Activated CD8-positive, alpha-beta T cell treated with anti-CD3 and anti-CD28 coated beads for 36 hours (primary cell): ENCODE measurements at regions of chr20 and their contacts with region 1.

Region 1: GRCh38 chr20:1776681-1777475 is 118.3 kb upstream of the SIRPA start:
- DNase-seq: peak; percentile 86
- ATAC-seq: peak; percentile 86
- H3K4me3 Mint-ChIP-seq: peak overlapping the region; percentile 84
- H3K27ac Mint-ChIP-seq: peak overlapping the region; percentile 44
- H3K4me1 Mint-ChIP-seq: peaks cover 13% of the 10 kb centered on the region
- H3K27me3 Mint-ChIP-seq: peaks cover 6% of the 10 kb centered on the region
- CTCF ChIP-seq: peak; percentile 89

Region 2: GRCh38 chr20:1503564-1504227 is 273.2 kb before region 1 on chr20:
- CTCF ChIA-PET with region 1: interaction called, 62 read pairs
- POLR2A ChIA-PET with region 1: no interaction called
- intact Hi-C with region 1: no loop called
- DNase-seq: peak; percentile 89
- ATAC-seq: peak; percentile 100
- H3K4me3 Mint-ChIP-seq: no peak overlapping the region
- H3K27ac Mint-ChIP-seq: no peak overlapping the region
- H3K4me1 Mint-ChIP-seq: peaks cover 4% of the 10 kb centered on the region
- H3K27me3 Mint-ChIP-seq: peaks cover 26% of the 10 kb centered on the region
- CTCF ChIP-seq: peak; percentile 99

Region 3: DNA sequence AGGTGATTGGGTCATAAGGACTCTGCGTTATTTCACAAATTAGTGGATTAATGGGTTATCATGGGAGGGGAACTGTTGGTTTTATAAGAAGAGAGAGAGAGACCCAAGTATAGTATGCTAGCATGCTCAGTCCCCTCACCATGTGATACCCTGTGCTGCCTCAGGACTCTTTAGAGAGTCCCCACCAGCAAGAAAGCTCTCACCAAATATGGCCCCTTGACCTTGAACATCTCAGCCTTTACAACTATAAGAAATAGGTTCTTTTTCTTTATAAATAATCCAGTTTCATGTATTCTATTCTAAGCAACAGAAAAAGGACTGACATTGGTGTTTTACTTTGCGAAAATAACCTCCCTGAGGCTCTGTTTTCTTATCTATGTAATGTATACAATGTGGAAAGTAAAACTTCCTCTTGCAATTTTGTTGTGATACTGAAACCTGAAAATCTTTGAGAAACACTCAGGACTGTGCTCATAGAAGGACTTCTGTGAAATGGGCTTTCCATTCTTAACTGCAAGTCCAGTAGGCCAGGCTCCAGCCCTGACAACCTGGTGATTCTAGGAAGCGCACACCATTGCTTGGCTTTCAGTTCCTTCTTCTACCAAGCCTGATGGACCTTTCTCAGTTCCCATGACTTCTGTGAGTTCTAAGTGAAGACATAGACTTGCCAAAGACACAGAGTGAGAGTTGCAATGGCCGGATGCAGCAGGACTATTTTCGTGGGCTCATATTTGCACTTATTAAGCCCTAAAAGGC is 241.3 kb before region 1 on chr20:
- CTCF ChIA-PET with region 1: interaction called, 23 read pairs
- POLR2A ChIA-PET with region 1: no interaction called
- intact Hi-C with region 1: no loop called
- DNase-seq: no peak
- ATAC-seq: no peak
- H3K4me3 Mint-ChIP-seq: no peak overlapping the region
- H3K27ac Mint-ChIP-seq: no peak overlapping the region
- H3K4me1 Mint-ChIP-seq: peaks cover 11% of the 10 kb centered on the region
- H3K27me3 Mint-ChIP-seq: no peaks in the 10 kb centered on the region
- CTCF ChIP-seq: no peak

Region 4: DNA sequence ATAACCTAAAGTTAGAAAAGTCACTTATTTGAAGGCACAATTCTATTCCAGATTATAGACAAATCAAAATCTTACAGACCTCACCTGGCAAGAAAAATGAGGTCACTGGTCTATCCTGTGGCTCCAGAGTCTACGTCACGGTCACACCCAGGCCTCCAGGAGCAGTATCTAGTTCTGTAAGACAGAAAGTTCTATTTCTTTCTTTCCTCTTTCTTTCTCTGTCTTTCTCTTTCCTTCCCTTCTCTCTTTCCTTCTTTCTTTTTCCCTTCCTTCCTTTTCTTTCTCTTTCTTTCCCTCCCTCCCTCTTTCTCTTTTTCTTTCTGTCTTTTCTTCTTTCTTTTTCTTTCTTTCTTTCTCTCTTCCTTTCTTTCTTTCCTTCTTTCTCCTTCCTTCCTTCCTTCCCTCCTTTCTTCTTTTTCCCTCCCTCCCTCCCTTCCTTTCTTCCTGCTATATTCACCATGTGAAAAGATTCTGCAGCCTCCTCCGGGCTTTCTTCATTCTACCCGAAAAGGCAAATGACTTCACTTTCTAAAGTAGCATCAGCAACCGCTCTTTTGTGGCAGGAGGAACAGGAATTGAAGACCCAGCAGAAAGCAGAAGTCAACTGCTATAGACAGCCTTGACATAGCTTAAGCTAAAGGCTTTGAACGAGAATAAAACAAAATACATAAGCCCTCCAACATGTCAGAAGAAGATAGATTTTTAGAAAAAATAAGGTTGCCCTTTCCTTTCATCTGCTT is 35.4 kb before region 1 on chr20:
- CTCF ChIA-PET with region 1: interaction called, 15 read pairs
- POLR2A ChIA-PET with region 1: no interaction called
- intact Hi-C with region 1: no loop called
- DNase-seq: no peak
- ATAC-seq: no peak
- H3K4me3 Mint-ChIP-seq: no peak overlapping the region
- H3K27ac Mint-ChIP-seq: no peak overlapping the region
- H3K4me1 Mint-ChIP-seq: peaks cover 4% of the 10 kb centered on the region
- H3K27me3 Mint-ChIP-seq: peaks cover 4% of the 10 kb centered on the region
- CTCF ChIP-seq: no peak

Region 5: GRCh38 chr20:1790386-1790785 is 13.5 kb after region 1 on chr20:
- CTCF ChIA-PET with region 1: interaction called, 26 read pairs
- POLR2A ChIA-PET with region 1: no interaction called
- intact Hi-C with region 1: no loop called
- DNase-seq: no peak
- ATAC-seq: no peak
- H3K4me3 Mint-ChIP-seq: no peak overlapping the region
- H3K27ac Mint-ChIP-seq: no peak overlapping the region
- H3K4me1 Mint-ChIP-seq: no peaks in the 10 kb centered on the region
- H3K27me3 Mint-ChIP-seq: peaks cover 29% of the 10 kb centered on the region
- CTCF ChIP-seq: no peak